ENCODE measurements at regions of chr4 and their contacts with region 1.

Region 1: GRCh38 chr4:4248029-4248884 is at the start of gene TMEM128:
- DNase-seq: peak; percentile 83
- H3K4me3 Mint-ChIP-seq: peak within 1 kb of the TSS; percentile 86
- H3K27ac Mint-ChIP-seq: peak within 1 kb of the TSS; percentile 91
- H3K4me1 Mint-ChIP-seq: peaks cover 9% of the 10 kb centered on the region
- H3K27me3 Mint-ChIP-seq: no peaks in the 10 kb centered on the region
- CTCF ChIP-seq: no peak
- total RNA-seq, gene TMEM128: 15.1 and 16.4 TPM in 2 replicates

Region 2: DNA sequence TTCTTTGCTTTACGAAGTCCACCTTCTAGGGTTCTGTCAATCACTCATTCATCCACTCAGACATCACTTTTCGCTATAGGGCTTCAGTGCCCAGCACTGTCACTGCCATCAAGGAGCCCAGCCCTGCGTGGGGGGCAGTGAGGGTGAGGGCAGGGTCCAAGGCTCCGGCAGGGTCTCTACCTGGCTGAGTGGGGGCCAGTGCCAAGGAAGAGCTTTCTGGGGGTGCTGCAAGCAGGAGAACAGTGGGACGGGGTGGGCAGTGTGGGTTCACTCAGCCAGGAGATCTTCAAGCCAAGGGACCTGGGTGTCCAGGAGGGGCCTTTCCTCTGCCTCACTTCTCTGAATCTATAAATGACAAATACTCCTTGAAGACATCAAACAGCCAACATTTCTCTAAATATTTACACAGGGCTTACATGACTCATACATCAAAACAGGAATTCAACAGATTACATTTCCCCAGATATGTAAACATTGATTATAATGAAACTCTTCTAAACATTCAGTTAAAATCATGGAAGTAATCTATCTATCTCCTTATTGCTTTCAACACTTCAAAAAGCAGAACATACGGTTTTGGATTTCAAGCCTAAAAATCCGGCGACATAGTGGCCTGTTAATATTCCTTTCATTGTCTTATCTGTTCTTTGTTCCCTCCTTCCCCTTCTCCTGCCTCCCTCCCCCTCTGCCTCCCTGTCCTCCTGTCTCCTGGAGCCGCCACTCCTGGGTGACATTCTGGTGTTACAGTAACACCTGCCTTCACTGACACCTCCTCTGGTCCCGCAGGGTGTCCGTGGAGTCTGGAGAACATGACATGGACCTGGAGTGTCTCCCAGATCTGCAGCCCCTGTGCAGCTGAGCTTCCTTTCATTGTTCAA is 576.4 kb before region 1 on chr4:
- CTCF ChIA-PET with region 1: no interaction called
- intact Hi-C with region 1: no loop called
- DNase-seq: no peak
- H3K4me3 Mint-ChIP-seq: no peak overlapping the region
- H3K27ac Mint-ChIP-seq: no peak overlapping the region
- H3K4me1 Mint-ChIP-seq: no peaks in the 10 kb centered on the region
- H3K27me3 Mint-ChIP-seq: peaks cover 91% of the 10 kb centered on the region
- CTCF ChIP-seq: no peak

Region 3: DNA sequence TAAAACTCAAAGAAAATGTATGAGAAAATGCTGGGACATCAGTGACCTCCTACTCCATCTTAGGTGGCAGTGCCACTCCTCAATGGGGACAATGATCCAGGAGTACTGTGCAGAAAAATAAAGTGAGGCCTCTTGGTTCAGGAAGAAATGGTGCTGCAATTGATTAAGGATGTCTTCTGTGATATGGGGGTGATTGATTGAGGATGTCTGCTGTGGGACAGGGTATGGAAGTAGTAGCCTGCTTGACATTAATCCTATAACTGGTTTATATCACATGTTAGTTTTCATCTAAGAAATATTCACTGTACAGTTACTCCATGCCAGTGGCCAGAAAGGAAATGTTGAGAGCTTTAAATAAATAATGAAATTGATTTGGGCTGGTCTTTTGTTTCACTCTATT is 42.1 kb before region 1 on chr4:
- CTCF ChIA-PET with region 1: no interaction called
- intact Hi-C with region 1: no loop called
- DNase-seq: no peak
- H3K4me3 Mint-ChIP-seq: no peak overlapping the region
- H3K27ac Mint-ChIP-seq: no peak overlapping the region
- H3K4me1 Mint-ChIP-seq: no peaks in the 10 kb centered on the region
- H3K27me3 Mint-ChIP-seq: peaks cover 76% of the 10 kb centered on the region
- CTCF ChIP-seq: no peak

Region 4: GRCh38 chr4:4228356-4228668 is 19.9 kb before region 1 on chr4:
- CTCF ChIA-PET with region 1: no interaction called
- intact Hi-C with region 1: no loop called
- DNase-seq: no peak
- H3K4me3 Mint-ChIP-seq: no peak overlapping the region
- H3K27ac Mint-ChIP-seq: no peak overlapping the region
- H3K4me1 Mint-ChIP-seq: no peaks in the 10 kb centered on the region
- H3K27me3 Mint-ChIP-seq: peaks cover 54% of the 10 kb centered on the region
- CTCF ChIP-seq: no peak

Region 5: GRCh38 chr4:4334798-4335520 is 86.7 kb after region 1 on chr4:
- CTCF ChIA-PET with region 1: no interaction called
- intact Hi-C with region 1: loop called (anchors 1 kb)
- DNase-seq: peak; percentile 77
- H3K4me3 Mint-ChIP-seq: peak overlapping the region; percentile 35
- H3K27ac Mint-ChIP-seq: no peak overlapping the region
- H3K4me1 Mint-ChIP-seq: peaks cover 8% of the 10 kb centered on the region
- H3K27me3 Mint-ChIP-seq: peaks cover 38% of the 10 kb centered on the region
- CTCF ChIP-seq: peak; percentile 50

Measured in Calu3 (cell line).